Activated CD8-positive, alpha-beta T cell treated with anti-CD3 and anti-CD28 coated beads, Interleukin-2, amount 10 ng/mL, durations not matched to agents 7 days and 5 days (primary cell): ENCODE measurements at regions of chr20 and their contacts with region 1.

Region 1: DNA sequence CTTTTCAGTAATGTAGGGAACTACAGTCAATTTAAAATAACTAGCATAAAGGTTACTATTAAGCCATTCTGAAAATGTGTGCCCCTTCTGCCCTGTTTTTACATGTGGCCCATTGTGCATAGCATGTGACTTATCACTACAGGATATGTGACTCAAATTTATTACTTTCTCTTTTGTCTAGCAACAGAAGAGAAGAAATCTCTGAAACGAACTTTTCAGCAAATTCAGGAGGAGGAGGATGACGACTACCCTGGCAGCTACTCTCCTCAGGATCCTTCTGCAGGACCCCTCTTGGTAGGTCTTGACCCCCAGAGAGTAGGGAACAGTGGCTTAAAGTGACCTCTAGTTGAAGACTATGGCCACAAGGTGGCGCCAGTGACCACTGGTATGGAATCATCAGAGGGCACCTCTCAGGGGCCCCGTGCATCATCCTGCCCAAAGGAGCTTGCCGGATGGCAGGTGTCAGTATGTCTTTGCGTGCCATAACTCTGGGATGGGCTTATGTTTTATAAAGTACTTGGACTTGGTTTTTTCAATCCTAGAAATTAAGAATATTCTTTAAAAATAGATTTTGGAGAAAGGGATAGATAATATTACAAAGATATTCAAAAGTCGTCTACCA is 23.9 kb downstream of the RPRD1B start:
- DNase-seq: peak; percentile 83
- ATAC-seq: peak; percentile 92
- H3K4me3 Mint-ChIP-seq: no peak overlapping the region
- H3K27ac Mint-ChIP-seq: peak overlapping the region; percentile 76
- H3K4me1 Mint-ChIP-seq: peaks cover 14% of the 10 kb centered on the region
- H3K27me3 Mint-ChIP-seq: no peaks in the 10 kb centered on the region

Region 2: DNA sequence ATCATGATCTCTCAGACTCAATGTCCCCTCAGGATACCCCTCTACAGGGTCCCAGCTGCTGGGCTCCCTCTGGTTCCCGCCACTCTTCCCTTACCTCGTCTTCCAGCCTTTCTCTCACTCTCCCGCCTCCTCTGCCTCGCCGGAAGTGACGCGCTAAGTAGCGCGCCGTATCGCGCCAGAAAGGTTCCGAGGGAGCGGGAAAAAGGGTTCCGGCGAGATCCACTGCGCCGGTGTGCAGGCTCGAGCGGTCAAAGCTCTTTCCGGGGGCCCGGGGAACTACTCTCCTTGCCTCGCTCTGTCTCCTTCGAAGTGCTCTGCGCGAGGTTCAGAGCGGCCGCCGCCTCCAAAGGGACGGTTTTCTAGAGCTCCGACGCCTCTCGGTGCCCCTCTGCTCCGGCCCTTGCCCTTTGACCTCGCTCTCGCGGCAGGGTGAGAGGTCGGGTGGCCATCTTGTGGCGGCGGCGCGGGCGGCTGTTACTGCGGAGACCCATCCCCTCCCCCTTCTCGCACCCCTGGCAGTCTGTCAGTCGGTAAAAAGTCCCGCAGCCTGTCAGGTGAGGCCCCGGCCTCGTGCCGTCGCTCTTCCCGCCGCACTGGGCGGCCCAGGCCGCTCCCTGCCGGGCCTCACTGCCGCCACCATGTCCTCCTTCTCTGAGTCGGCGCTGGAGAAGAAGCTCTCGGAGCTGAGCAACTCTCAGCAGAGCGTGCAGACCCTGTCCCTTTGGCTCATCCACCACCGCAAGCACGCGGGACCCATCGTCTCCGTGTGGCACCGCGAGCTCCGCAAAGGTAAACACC is 24.0 kb before region 1 on chr20 and contains the starts of genes RPRD1B and TTI1:
- CTCF ChIA-PET with region 1: interaction called, 12 read pairs
- POLR2A ChIA-PET with region 1: interaction called, 5 read pairs
- DNase-seq: peak; percentile 92
- ATAC-seq: peak; percentile 89
- H3K4me3 Mint-ChIP-seq: peak within 1 kb of the TSS; percentile 93
- H3K27ac Mint-ChIP-seq: peak within 1 kb of the TSS; percentile 99
- H3K4me1 Mint-ChIP-seq: peaks cover 64% of the 10 kb centered on the region
- H3K27me3 Mint-ChIP-seq: no peaks in the 10 kb centered on the region
- total RNA-seq, gene RPRD1B: 32.4 to 34.3 TPM
- total RNA-seq, gene TTI1: 29.3 to 32.2 TPM

Region 3: GRCh38 chr20:38165089-38165989 is 107.9 kb after region 1 on chr20 and contains the start of gene TGM2:
- CTCF ChIA-PET with region 1: interaction called, 17 read pairs
- POLR2A ChIA-PET with region 1: interaction called, 3 read pairs
- DNase-seq: peak; percentile 50
- ATAC-seq: peak; percentile 83
- H3K4me3 Mint-ChIP-seq: no peak within 1 kb of the TSS
- H3K27ac Mint-ChIP-seq: no peak within 1 kb of the TSS
- H3K4me1 Mint-ChIP-seq: peaks cover 38% of the 10 kb centered on the region
- H3K27me3 Mint-ChIP-seq: peaks cover 13% of the 10 kb centered on the region
- total RNA-seq, gene TGM2: 0.31 to 0.34 TPM